Sigmoid colon (tissue), 7 donors: ENCODE measurements at regions of chr15 and their contacts with region 1.

Region 1: GRCh38 chr15:40807028-40807887 is at the starts of genes DNAJC17 and ZFYVE19:
- DNase-seq: peak; percentile 98
- H3K4me3 ChIP-seq: peak within 1 kb of the TSS; percentile 85 to 98 (median 94)
- H3K27ac ChIP-seq: peak within 1 kb of the TSS; percentile 94 to 98 (median 96)
- H3K4me1 ChIP-seq: peaks cover 0 to 26% (median 19%) of the 10 kb centered on the region in 4 donors
- H3K27me3 ChIP-seq: no peaks in the 10 kb centered on the region
- CTCF ChIP-seq: peak in 2 of 4 experiments; percentile 17 to 19
- EP300 ChIP-seq: peak in 1 of 4 donors; percentile 18
- POLR2A ChIP-seq: peak in 1 of 2 donors; percentile 42
- total RNA-seq, gene DNAJC17: 9.1 to 25.8 (median 12.8) TPM
- total RNA-seq, gene ZFYVE19: 17.5 to 49.6 (median 29.9) TPM

Region 2: GRCh38 chr15:40160689-40161688 is 646.3 kb before region 1 on chr15 and contains the start of gene BUB1B:
- intact Hi-C with region 1: loop called (anchors 10 kb)
- DNase-seq: peak; percentile 95
- H3K4me3 ChIP-seq: peak within 1 kb of the TSS; percentile 28 to 60 (median 50)
- H3K27ac ChIP-seq: no peak within 1 kb of the TSS
- H3K4me1 ChIP-seq: peaks cover 0 to 13% (median 6%) of the 10 kb centered on the region in 4 donors
- H3K27me3 ChIP-seq: no peaks in the 10 kb centered on the region
- CTCF ChIP-seq: no peak
- EP300 ChIP-seq: no peak
- POLR2A ChIP-seq: no peak
- total RNA-seq, gene BUB1B: 0.33 to 3.6 (median 1.2) TPM

Region 3: DNA sequence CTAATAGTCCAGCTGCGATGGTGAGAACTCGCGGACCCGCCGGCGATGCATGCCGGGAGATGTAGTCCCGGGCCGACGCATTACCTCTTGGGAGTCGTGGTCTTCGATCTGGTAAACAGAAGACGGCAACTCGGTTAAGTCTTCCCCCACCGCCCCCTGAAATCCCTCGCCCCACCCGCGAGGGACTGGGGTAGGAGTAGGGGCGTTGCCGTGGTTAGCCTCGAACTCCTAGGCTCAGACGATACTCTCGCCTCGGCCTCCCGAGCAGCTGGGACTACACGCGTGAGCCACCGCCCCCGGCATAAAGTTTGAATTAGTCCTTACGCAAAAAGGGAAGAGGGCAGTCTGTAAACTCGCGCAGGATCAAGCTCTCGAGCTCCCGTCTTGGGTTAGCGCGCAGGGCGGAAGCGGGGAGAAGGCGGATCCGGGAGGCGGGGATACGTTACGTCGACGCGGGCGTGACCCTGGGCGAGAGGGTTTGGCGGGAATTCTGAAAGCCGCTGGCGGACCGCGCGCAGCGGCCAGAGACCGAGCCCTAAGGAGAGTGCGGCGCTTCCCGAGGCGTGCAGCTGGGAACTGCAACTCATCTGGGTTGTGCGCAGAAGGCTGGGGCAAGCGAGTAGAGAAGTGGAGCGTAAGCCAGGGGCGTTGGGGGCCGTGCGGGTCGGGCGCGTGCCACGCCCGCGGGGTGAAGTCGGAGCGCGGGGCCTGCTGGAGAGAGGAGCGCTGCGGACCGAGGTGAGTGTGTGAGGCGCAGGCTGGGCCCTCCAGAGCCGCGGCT is 112.4 kb before region 1 on chr15 and contains the start of gene RAD51:
- intact Hi-C with region 1: loop called (anchors 5 kb)
- DNase-seq: peak; percentile 95
- H3K4me3 ChIP-seq: peak within 1 kb of the TSS; percentile 69 to 89 (median 81)
- H3K27ac ChIP-seq: peak within 1 kb of the TSS; percentile 96 to 100 (median 98)
- H3K4me1 ChIP-seq: peaks cover 0 to 22% (median 20%) of the 10 kb centered on the region in 4 donors
- H3K27me3 ChIP-seq: no peaks in the 10 kb centered on the region
- CTCF ChIP-seq: no peak
- EP300 ChIP-seq: no peak
- POLR2A ChIP-seq: peak; percentile 19 to 52
- total RNA-seq, gene RAD51: 1.1 to 1.5 TPM in 2 of 4 donors, not detected in the others

Region 4: GRCh38 chr15:40754883-40755811 is 52.1 kb before region 1 on chr15 and contains the start of gene RMDN3:
- intact Hi-C with region 1: loop called (anchors 2 kb)
- DNase-seq: peak; percentile 96
- H3K4me3 ChIP-seq: peak within 1 kb of the TSS; percentile 69 to 95 (median 85)
- H3K27ac ChIP-seq: peak within 1 kb of the TSS; percentile 76 to 84 (median 80)
- H3K4me1 ChIP-seq: peaks cover 0 to 35% (median 25%) of the 10 kb centered on the region in 4 donors
- H3K27me3 ChIP-seq: no peaks in the 10 kb centered on the region
- CTCF ChIP-seq: no peak
- EP300 ChIP-seq: no peak
- POLR2A ChIP-seq: no peak
- total RNA-seq, gene RMDN3: 20.8 to 26.4 (median 22.4) TPM

Region 5: DNA sequence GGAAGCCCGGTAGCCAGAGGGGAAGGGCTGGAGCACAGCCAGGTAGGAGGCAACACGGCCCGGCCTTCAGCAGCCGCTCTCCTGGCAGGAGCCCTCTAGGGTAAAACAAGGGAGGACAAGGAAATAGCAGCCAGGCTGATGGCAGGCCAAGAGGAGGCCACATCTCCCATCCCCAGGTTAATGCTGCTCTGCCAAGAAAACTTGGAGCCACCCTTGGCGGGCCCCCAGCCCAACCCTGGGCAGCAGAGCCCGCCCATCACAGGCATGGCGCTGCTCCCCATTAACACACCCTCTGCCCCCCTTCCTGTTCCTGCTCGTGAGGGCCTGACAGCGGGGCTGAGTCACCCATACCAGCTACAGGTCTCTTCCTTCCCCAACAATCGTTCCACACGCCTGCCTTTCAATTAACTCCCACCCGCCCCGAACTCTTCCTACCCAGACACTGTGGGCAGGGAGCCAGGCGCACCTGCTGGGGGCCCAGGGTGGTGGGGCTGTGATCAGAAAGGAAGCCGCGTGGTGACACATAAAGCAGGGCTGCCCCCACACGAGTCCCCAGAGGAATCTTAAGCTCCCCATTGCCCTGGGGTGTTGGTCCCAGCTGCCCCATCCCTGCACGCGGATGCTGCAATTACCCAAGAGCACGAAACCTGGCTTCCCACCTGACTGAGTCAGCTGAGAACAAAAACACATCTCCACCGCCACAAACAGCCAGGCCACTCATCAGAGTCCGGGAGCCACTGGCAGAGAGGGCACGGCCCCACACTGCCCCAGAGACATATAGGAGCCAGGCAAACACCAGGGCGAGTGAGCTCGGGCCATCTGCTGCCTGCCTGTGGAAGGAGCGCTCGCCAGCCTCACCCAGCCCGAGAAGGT is 37.7 kb before region 1 on chr15 and contains the start of gene C15orf62:
- intact Hi-C with region 1: loop called (anchors 5 kb)
- DNase-seq: no peak
- H3K4me3 ChIP-seq: no peak within 1 kb of the TSS
- H3K27ac ChIP-seq: peak within 1 kb of the TSS; percentile 31 to 59 (median 48)
- H3K4me1 ChIP-seq: peaks cover 0 to 27% (median 23%) of the 10 kb centered on the region in 4 donors
- H3K27me3 ChIP-seq: no peaks in the 10 kb centered on the region
- CTCF ChIP-seq: no peak
- EP300 ChIP-seq: no peak
- POLR2A ChIP-seq: no peak
- total RNA-seq, gene C15orf62: 0.28 to 0.71 (median 0.66) TPM in 3 of 4 donors, not detected in the other